OCI-LY7 (cell line): ENCODE measurements at regions of chr5 and their contacts with region 1.

Region 1: DNA sequence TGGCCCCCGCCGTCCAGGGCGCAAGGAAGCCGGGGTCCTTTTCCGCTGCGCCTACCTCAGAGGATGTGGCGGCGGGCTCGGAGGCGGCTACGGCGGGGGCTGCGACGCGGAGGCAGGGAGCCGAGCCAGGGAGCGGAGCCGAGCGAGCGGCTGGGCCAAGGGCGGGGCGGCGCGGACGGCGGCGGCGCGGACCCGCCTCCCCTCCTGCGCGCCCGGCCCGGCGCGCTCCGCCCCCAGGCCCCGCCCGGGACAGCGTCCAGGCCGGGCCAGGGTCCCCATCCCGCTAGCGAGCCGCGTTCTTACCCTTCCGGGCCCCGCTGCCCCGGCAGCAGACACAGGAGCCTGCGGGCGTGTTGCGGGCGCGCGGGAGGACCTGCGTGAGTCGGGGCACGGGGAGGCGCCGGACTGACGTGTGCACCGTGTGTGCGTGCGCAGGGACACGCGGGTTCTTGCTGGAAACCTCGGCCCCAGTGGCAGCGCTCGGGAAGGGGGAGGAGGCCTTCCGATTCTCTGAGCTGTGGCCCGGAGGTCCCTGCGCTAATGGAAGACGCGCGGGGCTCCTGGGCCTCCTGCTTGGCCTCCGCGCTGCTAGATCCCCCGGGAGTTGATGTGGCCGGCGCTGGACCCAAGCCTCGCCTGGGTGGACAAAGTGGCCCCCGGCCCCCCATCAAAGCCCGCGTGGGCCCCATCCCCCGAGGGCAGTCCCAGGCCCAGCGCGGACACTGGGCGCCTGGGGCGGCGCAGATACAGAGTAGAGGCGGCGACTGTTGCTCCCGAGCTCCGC is at the start of gene VDAC1:
- DNase-seq: peak; percentile 82
- H3K4me3 ChIP-seq: peak within 1 kb of the TSS; percentile 83
- H3K27ac ChIP-seq: peak within 1 kb of the TSS; percentile 66
- H3K4me1 ChIP-seq: peaks cover 28% of the 10 kb centered on the region
- CTCF ChIP-seq: no peak
- total RNA-seq, gene VDAC1: 143 and 157 TPM in 2 replicates

Region 2: GRCh38 chr5:133652951-133653759 is 351.6 kb before region 1 on chr5:
- CTCF ChIA-PET with region 1: no interaction called
- POLR2A ChIA-PET with region 1: no interaction called
- intact Hi-C with region 1: no loop called
- DNase-seq: no peak
- H3K4me3 ChIP-seq: no peak overlapping the region
- H3K27ac ChIP-seq: no peak overlapping the region
- H3K4me1 ChIP-seq: peaks cover 3% of the 10 kb centered on the region
- CTCF ChIP-seq: no peak

Region 3: GRCh38 chr5:133993231-133993949 is 11.4 kb before region 1 on chr5:
- CTCF ChIA-PET with region 1: interaction called, 4 read pairs
- POLR2A ChIA-PET with region 1: interaction called, 24 read pairs
- intact Hi-C with region 1: no loop called
- DNase-seq: no peak
- H3K4me3 ChIP-seq: no peak overlapping the region
- H3K27ac ChIP-seq: no peak overlapping the region
- H3K4me1 ChIP-seq: peaks cover 52% of the 10 kb centered on the region
- CTCF ChIP-seq: no peak